ENCODE measurements at regions of chr1 and their contacts with region 1.

Region 1: GRCh38 chr1:15885701-15886610 is 38.4 kb downstream of the SPEN start:
- DNase-seq: peak in 27 of 35 experiments; percentile 1 to 60 (median 13)
- ATAC-seq: peak in 3 of 4 experiments; percentile 43 to 71 (median 51)
- H3K4me3 ChIP-seq: no peak overlapping the region
- H3K4me3 Mint-ChIP-seq: peak overlapping the region; percentile 51 to 66 (median 61)
- H3K27ac ChIP-seq: peak overlapping the region; percentile 50
- H3K27ac Mint-ChIP-seq: peak overlapping the region; percentile 50 to 69
- H3K4me1 ChIP-seq: peaks cover 2 to 18% of the 10 kb centered on the region in 2 experiments
- H3K4me1 Mint-ChIP-seq: peaks cover 66 to 68% (median 67%) of the 10 kb centered on the region in 3 donors
- H3K27me3 ChIP-seq: no peaks in the 10 kb centered on the region
- H3K27me3 Mint-ChIP-seq: no peaks in the 10 kb centered on the region

Region 2: GRCh38 chr1:15765495-15766194 is 120.3 kb before region 1 on chr1:
- CTCF ChIA-PET with region 1: no interaction called
- POLR2A ChIA-PET with region 1: interaction called in 1 of 2 experiments, 10 read pairs
- DNase-seq: no peak
- ATAC-seq: no peak
- H3K4me3 ChIP-seq: no peak overlapping the region
- H3K4me3 Mint-ChIP-seq: no peak overlapping the region
- H3K27ac ChIP-seq: no peak overlapping the region
- H3K27ac Mint-ChIP-seq: no peak overlapping the region
- H3K4me1 ChIP-seq: no peaks in the 10 kb centered on the region
- H3K4me1 Mint-ChIP-seq: no peaks in the 10 kb centered on the region
- H3K27me3 ChIP-seq: peaks cover 5 to 47% of the 10 kb centered on the region in 2 experiments
- H3K27me3 Mint-ChIP-seq: peaks cover 5 to 34% of the 10 kb centered on the region in 2 donors

Region 3: DNA sequence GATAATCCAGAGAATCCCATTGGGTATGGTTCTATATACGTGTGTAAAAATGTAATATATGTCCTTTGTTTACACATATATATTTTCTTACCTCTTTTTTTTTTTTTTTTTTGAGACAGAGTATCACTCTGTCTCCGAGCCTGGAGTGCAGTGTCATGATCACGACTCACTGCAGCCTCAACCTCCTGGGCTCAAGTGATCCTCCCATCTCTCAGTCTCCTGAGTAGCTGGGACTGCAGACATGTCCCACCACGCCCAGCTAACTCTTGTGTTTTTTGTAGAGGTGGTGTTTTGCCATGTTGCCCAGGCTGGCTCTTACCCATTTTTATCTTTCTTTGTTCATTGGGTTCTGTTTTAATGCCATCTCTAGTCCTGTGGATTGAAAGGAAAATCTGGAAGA is 30.5 kb after region 1 on chr1:
- CTCF ChIA-PET with region 1: no interaction called
- POLR2A ChIA-PET with region 1: no interaction called
- DNase-seq: peak in 1 of 35 experiments; percentile 8
- ATAC-seq: peak in 1 of 4 experiments; percentile 10
- H3K4me3 ChIP-seq: peak overlapping the region in 1 of 2 donors; percentile 9
- H3K4me3 Mint-ChIP-seq: peak overlapping the region; percentile 39 to 72 (median 48)
- H3K27ac ChIP-seq: no peak overlapping the region
- H3K27ac Mint-ChIP-seq: peak overlapping the region; percentile 62 to 73
- H3K4me1 ChIP-seq: peaks cover 0 to 12% of the 10 kb centered on the region in 2 experiments
- H3K4me1 Mint-ChIP-seq: peaks cover 36 to 44% (median 42%) of the 10 kb centered on the region in 3 donors
- H3K27me3 ChIP-seq: no peaks in the 10 kb centered on the region
- H3K27me3 Mint-ChIP-seq: no peaks in the 10 kb centered on the region

Region 4: DNA sequence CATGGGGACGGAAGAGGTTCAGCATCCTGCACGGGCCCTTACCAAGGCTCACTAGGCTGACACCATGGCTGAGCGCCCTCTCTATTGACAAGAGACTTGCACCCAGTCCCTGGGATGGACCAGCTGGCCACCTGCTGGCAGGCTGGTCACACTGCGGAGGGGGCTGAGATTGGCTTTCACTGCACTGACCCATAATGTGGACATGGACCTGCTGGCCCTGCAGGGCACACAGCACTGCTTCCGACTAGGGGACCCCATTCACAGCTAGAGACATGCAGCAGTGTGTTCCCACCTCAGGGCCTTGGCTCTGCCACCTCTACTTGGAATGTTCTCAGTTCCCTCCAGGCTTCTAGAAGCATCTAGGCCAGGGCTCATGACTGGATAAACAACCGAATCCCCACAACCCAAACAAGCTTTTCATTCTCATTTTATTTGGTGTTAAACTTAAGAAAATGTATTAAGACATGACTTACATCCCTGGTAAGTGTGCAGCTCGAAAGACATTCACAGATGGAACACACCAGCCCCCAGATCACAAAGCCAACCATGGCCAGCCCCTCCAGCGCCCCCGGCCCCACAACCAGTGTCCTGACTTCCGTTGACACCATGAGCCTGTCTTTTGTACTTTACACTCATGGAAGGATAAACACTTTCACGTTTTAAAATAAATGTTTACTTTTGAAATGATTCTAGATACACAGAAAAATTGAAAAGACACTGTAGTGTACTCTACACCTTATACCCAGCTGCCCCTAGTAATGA is 108.8 kb after region 1 on chr1:
- CTCF ChIA-PET with region 1: no interaction called
- POLR2A ChIA-PET with region 1: no interaction called
- DNase-seq: peak in 18 of 35 experiments; percentile 9 to 53 (median 24)
- ATAC-seq: peak; percentile 26 to 69 (median 56)
- H3K4me3 ChIP-seq: no peak overlapping the region
- H3K4me3 Mint-ChIP-seq: no peak overlapping the region
- H3K27ac ChIP-seq: no peak overlapping the region
- H3K27ac Mint-ChIP-seq: no peak overlapping the region
- H3K4me1 ChIP-seq: no peaks in the 10 kb centered on the region
- H3K4me1 Mint-ChIP-seq: no peaks in the 10 kb centered on the region
- H3K27me3 ChIP-seq: peaks cover 0 to 18% of the 10 kb centered on the region in 2 experiments
- H3K27me3 Mint-ChIP-seq: no peaks in the 10 kb centered on the region